Mammary epithelial cell (primary cell): ENCODE measurements at regions of chr19 and their contacts with region 1.

Region 1: GRCh38 chr19:18985257-18985656 is 44.2 kb upstream of the HOMER3 start:
- DNase-seq: no peak
- H3K4me3 ChIP-seq: no peak overlapping the region
- H3K27ac ChIP-seq: no peak overlapping the region
- H3K4me1 ChIP-seq: peaks cover 3% of the 10 kb centered on the region
- H3K27me3 ChIP-seq: peaks cover 1% of the 10 kb centered on the region
- CTCF ChIP-seq: no peak

Region 2: GRCh38 chr19:18771328-18772242 is 213.7 kb before region 1 on chr19:
- CTCF ChIA-PET with region 1: no interaction called
- dilution Hi-C with region 1: no loop called
- in situ Hi-C with region 1: no loop called
- intact Hi-C with region 1: loop called (anchors 1 kb)
- DNase-seq: no peak
- H3K4me3 ChIP-seq: no peak overlapping the region
- H3K27ac ChIP-seq: no peak overlapping the region
- H3K4me1 ChIP-seq: peaks cover 29% of the 10 kb centered on the region
- H3K27me3 ChIP-seq: no peaks in the 10 kb centered on the region
- CTCF ChIP-seq: peak in 1 of 2 donors; percentile 19

Region 3: DNA sequence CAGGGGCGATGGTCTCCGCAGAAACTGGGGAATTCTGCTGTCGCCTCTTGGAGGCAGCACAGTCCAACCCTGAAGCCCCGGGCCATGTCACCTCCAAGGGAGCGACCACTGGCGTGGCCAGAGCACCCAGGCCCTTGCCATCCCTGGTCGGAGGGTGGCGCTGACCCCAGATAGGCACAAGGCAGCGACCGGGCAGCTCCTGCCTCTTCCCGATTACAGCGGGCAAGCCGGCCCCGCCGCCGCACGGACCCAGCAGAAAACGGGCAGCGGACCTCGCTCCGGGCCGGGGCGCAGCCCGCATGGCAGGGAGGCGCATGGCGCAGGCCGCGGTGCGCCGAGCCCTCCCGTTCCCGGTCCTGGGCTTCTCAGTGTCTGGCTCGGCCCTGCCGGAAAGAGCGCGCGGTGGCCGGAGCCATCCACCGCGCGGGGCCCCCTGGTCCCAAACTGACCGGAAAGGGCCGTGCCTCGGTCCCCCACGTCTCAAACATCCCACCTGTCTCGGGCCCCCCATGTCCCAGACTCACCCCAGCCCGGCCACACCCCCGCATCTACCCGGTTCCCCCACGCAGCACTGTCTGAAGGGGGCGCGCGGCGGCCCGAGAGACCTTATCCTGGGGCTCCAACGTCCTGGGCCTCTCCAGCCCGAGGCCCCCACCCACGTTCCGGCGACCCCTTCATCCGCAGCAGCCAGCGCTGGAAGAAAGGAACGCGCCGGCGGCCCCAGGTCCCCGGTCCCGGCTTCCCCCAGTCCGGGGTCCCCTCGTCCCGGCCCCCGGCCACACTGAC is 90.0 kb before region 1 on chr19:
- CTCF ChIA-PET with region 1: interaction called, 6 read pairs
- dilution Hi-C with region 1: no loop called
- in situ Hi-C with region 1: no loop called
- intact Hi-C with region 1: loop called (anchors 1 kb)
- DNase-seq: peak; percentile 28
- H3K4me3 ChIP-seq: peak overlapping the region; percentile 20 to 41 (median 33)
- H3K27ac ChIP-seq: no peak overlapping the region
- H3K4me1 ChIP-seq: peaks cover 15% of the 10 kb centered on the region
- H3K27me3 ChIP-seq: peaks cover 18% of the 10 kb centered on the region
- CTCF ChIP-seq: peak in 1 of 2 donors; percentile 27

Region 4: DNA sequence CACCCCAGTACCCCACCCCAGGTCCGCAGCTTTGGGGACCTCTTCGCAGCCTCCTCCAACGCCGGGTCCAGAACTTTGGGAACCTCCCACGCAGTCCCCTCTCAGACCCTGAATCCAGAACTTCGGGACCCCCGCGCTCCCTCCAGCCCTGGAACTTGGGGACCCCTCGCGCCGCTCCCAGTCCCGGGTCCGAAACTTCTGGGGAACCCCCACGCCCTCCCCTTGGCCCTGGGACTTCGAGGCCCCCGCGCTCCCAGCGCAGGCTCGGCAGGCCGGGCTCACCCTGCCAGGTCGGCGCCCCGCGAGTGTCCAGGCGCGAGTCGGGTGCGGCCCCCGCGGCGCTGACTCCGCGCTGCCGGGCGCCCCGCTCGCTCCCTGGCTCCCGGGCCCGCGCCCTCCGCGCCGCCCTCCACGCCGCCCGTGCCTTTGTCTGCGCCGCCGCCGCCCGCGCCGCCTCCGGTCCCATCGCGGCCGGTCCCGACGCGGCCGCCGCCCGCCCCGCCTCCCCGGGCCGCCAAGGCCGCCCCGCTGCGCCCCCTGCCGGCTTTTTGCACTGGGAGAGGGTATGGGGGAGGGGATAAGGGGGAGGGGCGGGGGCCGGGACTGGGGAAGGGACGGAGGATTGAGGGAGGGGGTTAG is 44.4 kb before region 1 on chr19 and contains the start of gene HOMER3:
- CTCF ChIA-PET with region 1: no interaction called
- dilution Hi-C with region 1: no loop called
- in situ Hi-C with region 1: no loop called
- intact Hi-C with region 1: loop called (anchors 1 kb)
- DNase-seq: no peak
- H3K4me3 ChIP-seq: peak within 1 kb of the TSS; percentile 82 to 97 (median 87)
- H3K27ac ChIP-seq: peak within 1 kb of the TSS; percentile 68
- H3K4me1 ChIP-seq: peaks cover 13% of the 10 kb centered on the region
- H3K27me3 ChIP-seq: no peaks in the 10 kb centered on the region
- CTCF ChIP-seq: peak; percentile 4 to 48
- total RNA-seq, gene HOMER3: 114 to 138 TPM

Region 5: GRCh38 chr19:19026299-19026971 is 41.2 kb after region 1 on chr19:
- CTCF ChIA-PET with region 1: no interaction called
- dilution Hi-C with region 1: loop called (anchors 5 kb)
- in situ Hi-C with region 1: no loop called
- intact Hi-C with region 1: no loop called
- DNase-seq: no peak
- H3K4me3 ChIP-seq: no peak overlapping the region
- H3K27ac ChIP-seq: no peak overlapping the region
- H3K4me1 ChIP-seq: peaks cover 9% of the 10 kb centered on the region
- H3K27me3 ChIP-seq: no peaks in the 10 kb centered on the region
- CTCF ChIP-seq: peak in 1 of 2 donors; percentile 33